PC-9 (cell line): ENCODE measurements at regions of chr4 and their contacts with region 1.

Region 1: GRCh38 chr4:168076989-168077725 is 15.2 kb upstream of the ANXA10 start:
- DNase-seq: peak; percentile 34 to 49
- H3K4me3 ChIP-seq: no peak overlapping the region
- H3K27ac ChIP-seq: no peak overlapping the region
- H3K4me1 ChIP-seq: no peaks in the 10 kb centered on the region
- H3K27me3 ChIP-seq: no peaks in the 10 kb centered on the region
- CTCF ChIP-seq: peak; percentile 84

Region 2: GRCh38 chr4:167622481-167623246 is 454.5 kb before region 1 on chr4:
- CTCF ChIA-PET with region 1: no interaction called
- POLR2A ChIA-PET with region 1: no interaction called
- intact Hi-C with region 1: loop called (anchors 1 kb)
- DNase-seq: peak in 1 of 2 experiments; percentile 40
- H3K4me3 ChIP-seq: no peak overlapping the region
- H3K27ac ChIP-seq: no peak overlapping the region
- H3K4me1 ChIP-seq: no peaks in the 10 kb centered on the region
- H3K27me3 ChIP-seq: no peaks in the 10 kb centered on the region
- CTCF ChIP-seq: peak; percentile 72

Region 3: GRCh38 chr4:168153596-168154440 is 76.7 kb after region 1 on chr4:
- CTCF ChIA-PET with region 1: no interaction called
- POLR2A ChIA-PET with region 1: no interaction called
- intact Hi-C with region 1: loop called (anchors 5 kb)
- DNase-seq: peak; percentile 37 to 54
- H3K4me3 ChIP-seq: peak overlapping the region; percentile 48; the same call in 1 of the 2 replicates
- H3K27ac ChIP-seq: no peak overlapping the region
- H3K4me1 ChIP-seq: no peaks in the 10 kb centered on the region
- H3K27me3 ChIP-seq: no peaks in the 10 kb centered on the region
- CTCF ChIP-seq: peak; percentile 78